ENCODE measurements at regions of chr7 and their contacts with region 1.

Region 1: DNA sequence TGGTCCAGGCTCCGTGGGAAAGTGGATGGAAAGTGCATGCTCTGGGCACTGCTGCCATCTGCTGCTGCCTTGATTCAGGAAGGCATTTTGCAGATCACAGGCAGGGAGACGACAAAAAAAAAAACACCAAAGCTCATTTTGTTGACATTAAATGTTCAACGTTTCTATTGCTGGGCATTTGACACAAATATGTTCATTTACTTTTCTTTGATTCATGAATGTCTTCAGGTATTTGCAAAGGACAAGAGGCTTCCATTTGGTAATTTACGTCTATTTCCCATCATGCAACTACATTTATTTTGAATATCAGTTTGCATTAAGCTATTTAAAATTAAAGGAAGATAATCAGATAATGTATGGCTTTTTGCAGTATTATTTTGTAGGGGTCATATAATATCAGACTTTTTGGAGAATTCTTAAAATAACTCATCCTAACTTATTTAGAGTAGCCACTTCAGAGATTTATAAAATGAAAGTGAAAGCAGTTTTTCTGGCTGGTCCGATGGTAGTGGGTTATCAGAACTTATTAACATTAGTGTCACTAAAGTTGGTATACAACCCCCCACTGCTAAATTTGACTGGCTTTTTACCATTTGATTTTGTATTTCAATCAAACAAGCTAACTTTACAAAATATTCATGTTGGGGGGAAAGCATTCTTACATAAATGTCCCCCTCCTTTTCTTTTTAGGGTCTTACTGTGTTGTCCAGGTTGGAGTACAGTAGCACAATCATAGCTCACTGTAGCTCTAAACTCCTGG is 65.3 kb downstream of the PDIA4 start:
- DNase-seq: peak; percentile 64
- CTCF ChIP-seq: peak; percentile 78

Region 2: GRCh38 chr7:148503875-148504487 is 459.0 kb before region 1 on chr7:
- CTCF ChIA-PET with region 1: interaction called, 16 read pairs
- POLR2A ChIA-PET with region 1: interaction called, 3 read pairs
- DNase-seq: peak; percentile 29
- CTCF ChIP-seq: peak; percentile 77

Region 3: GRCh38 chr7:148712678-148713329 is 250.2 kb before region 1 on chr7:
- CTCF ChIA-PET with region 1: no interaction called
- POLR2A ChIA-PET with region 1: no interaction called
- DNase-seq: no peak
- CTCF ChIP-seq: no peak

Region 4: DNA sequence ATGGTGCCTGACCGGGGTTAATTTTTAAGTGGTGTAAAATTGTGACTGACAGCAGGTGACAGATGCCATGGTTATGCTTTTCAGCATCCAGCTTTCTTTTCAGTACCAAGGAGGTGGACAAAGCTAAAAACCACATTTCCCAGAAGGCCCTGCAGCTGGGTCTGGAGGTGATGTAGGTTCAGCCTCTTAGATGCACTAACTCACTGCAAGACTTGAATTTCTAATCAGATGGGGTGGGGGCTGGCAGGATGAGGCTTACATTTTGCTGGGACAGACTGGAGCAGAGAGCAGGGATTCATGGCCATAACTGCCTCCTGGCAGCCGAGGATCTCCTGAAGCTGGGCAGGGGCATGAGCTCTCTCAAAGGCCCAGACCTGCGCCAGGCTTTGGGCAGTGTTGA is 12.9 kb after region 1 on chr7:
- CTCF ChIA-PET with region 1: interaction called, 19 read pairs
- POLR2A ChIA-PET with region 1: no interaction called
- DNase-seq: no peak
- CTCF ChIP-seq: no peak

Region 5: GRCh38 chr7:148987010-148987750 is 24.2 kb after region 1 on chr7:
- CTCF ChIA-PET with region 1: interaction called, 10 read pairs
- POLR2A ChIA-PET with region 1: no interaction called
- DNase-seq: peak; percentile 91
- CTCF ChIP-seq: no peak